ENCODE measurements at regions of chr2 and their contacts with region 1.

Region 1: GRCh38 chr2:84314901-84315330 is 144.2 kb downstream of the SUCLG1 start:
- DNase-seq: peak; percentile 44 to 76 (median 69)
- ATAC-seq: peak; percentile 81
- H3K4me3 ChIP-seq: no peak overlapping the region
- H3K4me3 Mint-ChIP-seq: peak overlapping the region in 1 of 10 donors; percentile 9
- H3K27ac ChIP-seq: no peak overlapping the region
- H3K27ac Mint-ChIP-seq: no peak overlapping the region
- H3K4me1 ChIP-seq: no peaks in the 10 kb centered on the region
- H3K4me1 Mint-ChIP-seq: peaks cover 2 to 6% (median 5%) of the 10 kb centered on the region in 7 donors
- H3K27me3 ChIP-seq: no peaks in the 10 kb centered on the region
- H3K27me3 Mint-ChIP-seq: peaks cover 4 to 19% (median 12%) of the 10 kb centered on the region in 5 donors

Region 2: GRCh38 chr2:84424152-84424551 is 109.2 kb after region 1 on chr2:
- CTCF ChIA-PET with region 1: no interaction called
- POLR2A ChIA-PET with region 1: no interaction called
- intact Hi-C with region 1: loop called (anchors 10 kb)
- DNase-seq: peak in 1 of 9 donors; percentile 3
- ATAC-seq: no peak
- H3K4me3 ChIP-seq: no peak overlapping the region
- H3K4me3 Mint-ChIP-seq: no peak overlapping the region
- H3K27ac ChIP-seq: no peak overlapping the region
- H3K27ac Mint-ChIP-seq: peak overlapping the region in 4 of 9 donors; percentile 1 to 47 (median 16)
- H3K4me1 ChIP-seq: no peaks in the 10 kb centered on the region
- H3K4me1 Mint-ChIP-seq: peaks cover 0 to 7% (median 0%) of the 10 kb centered on the region in 7 donors
- H3K27me3 ChIP-seq: no peaks in the 10 kb centered on the region
- H3K27me3 Mint-ChIP-seq: no peaks in the 10 kb centered on the region

Measured in naive thymus-derived CD4-positive, alpha-beta T cell (primary cell).